ENCODE measurements at regions of chr14 and their contacts with region 1.

Region 1: GRCh38 chr14:29548948-29549370 is 378.7 kb downstream of the PRKD1 start:
- DNase-seq: peak; percentile 42
- H3K4me3 ChIP-seq: no peak overlapping the region
- H3K27ac ChIP-seq: no peak overlapping the region
- H3K27me3 ChIP-seq: no peaks in the 10 kb centered on the region
- CTCF ChIP-seq: peak; percentile 60

Region 2: GRCh38 chr14:28756884-28757570 is 791.9 kb before region 1 on chr14:
- CTCF ChIA-PET with region 1: interaction called, 11 read pairs
- POLR2A ChIA-PET with region 1: no interaction called
- DNase-seq: no peak
- H3K4me3 ChIP-seq: no peak overlapping the region
- H3K27ac ChIP-seq: no peak overlapping the region
- H3K27me3 ChIP-seq: peaks cover 65% of the 10 kb centered on the region
- CTCF ChIP-seq: peak; percentile 87

Region 3: GRCh38 chr14:29705801-29706200 is 156.8 kb after region 1 on chr14:
- CTCF ChIA-PET with region 1: no interaction called
- POLR2A ChIA-PET with region 1: no interaction called
- DNase-seq: no peak
- H3K4me3 ChIP-seq: no peak overlapping the region
- H3K27ac ChIP-seq: no peak overlapping the region
- H3K27me3 ChIP-seq: no peaks in the 10 kb centered on the region
- CTCF ChIP-seq: no peak

Region 4: GRCh38 chr14:29927376-29928116 is 378.6 kb after region 1 on chr14 and contains the start of gene PRKD1:
- CTCF ChIA-PET with region 1: interaction called, 11 read pairs
- POLR2A ChIA-PET with region 1: interaction called, 3 read pairs
- DNase-seq: no peak
- H3K4me3 ChIP-seq: peak within 1 kb of the TSS; percentile 88
- H3K27ac ChIP-seq: peak within 1 kb of the TSS; percentile 21
- H3K27me3 ChIP-seq: no peaks in the 10 kb centered on the region
- CTCF ChIP-seq: no peak
- polyA plus RNA-seq, gene PRKD1: 20.7 and 24.5 TPM in 2 replicates

Region 5: DNA sequence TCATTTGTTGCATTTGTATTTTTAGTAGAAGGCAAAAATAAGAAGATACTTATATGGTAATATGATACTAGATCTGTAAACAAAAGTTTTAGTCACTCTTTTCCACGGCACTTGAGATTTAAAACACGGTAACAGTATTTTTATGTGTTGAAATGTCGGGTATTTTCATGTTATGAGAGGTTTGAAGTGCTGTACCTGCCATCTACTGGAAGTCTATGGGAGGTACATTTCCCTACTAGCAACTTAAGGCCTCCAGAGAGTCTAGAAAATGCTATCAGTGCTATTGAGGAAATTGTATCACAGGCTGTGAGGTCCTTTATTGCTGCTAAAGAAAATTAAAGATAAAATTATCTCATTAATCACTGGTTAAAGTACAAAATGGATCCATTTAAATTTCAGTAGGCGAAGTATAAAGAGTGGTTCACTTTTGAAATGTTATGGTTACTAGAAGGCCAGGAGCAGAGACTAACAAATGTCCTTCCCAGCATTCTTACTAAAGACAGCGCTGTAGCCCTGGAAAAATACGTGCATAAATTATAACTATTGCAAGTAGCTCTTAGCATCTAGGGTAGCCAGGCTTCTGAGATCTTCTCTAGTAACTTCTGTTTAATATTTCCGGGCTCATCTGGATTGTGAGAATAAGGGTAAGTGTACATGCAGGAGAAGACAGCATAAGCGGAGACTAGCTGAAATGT is 456.3 kb after region 1 on chr14:
- CTCF ChIA-PET with region 1: interaction called, 43 read pairs
- POLR2A ChIA-PET with region 1: no interaction called
- DNase-seq: peak; percentile 53
- H3K4me3 ChIP-seq: no peak overlapping the region
- H3K27ac ChIP-seq: no peak overlapping the region
- H3K27me3 ChIP-seq: no peaks in the 10 kb centered on the region
- CTCF ChIP-seq: peak; percentile 85

Region 6: DNA sequence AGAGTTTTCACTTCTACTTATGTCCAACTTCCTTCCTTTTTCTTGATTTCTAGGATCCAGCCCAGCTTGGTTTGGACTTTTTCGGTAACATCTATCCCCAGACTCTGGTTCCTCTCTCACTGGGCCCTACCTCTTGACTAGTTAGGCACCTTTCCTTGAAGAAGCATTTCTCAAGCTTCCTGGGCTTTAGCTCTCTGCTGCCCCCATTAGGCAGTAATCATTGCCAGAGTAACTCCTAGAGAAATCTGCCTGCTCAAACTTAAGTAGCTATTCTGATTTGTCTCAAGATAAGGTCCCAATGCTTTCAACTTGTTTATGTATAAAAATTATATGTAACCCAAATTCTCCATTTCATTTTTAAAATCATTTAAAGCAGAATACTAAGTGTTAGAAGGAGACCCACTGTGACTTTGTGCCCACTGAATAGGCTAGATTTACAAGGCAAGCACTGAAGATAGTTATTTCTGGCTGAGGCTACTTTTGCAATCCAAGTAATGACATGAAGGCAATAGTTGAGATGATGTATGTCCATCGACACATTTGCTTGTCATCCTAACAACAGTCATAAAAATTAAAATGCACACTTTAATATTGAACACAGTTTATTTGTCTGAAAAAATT is 735.0 kb after region 1 on chr14:
- CTCF ChIA-PET with region 1: interaction called, 22 read pairs
- POLR2A ChIA-PET with region 1: no interaction called
- DNase-seq: no peak
- H3K4me3 ChIP-seq: no peak overlapping the region
- H3K27ac ChIP-seq: no peak overlapping the region
- H3K27me3 ChIP-seq: no peaks in the 10 kb centered on the region
- CTCF ChIP-seq: peak; percentile 95